Psoas muscle (tissue), 8 donors: ENCODE measurements at regions of chr10 and their contacts with region 1.

Region 1: DNA sequence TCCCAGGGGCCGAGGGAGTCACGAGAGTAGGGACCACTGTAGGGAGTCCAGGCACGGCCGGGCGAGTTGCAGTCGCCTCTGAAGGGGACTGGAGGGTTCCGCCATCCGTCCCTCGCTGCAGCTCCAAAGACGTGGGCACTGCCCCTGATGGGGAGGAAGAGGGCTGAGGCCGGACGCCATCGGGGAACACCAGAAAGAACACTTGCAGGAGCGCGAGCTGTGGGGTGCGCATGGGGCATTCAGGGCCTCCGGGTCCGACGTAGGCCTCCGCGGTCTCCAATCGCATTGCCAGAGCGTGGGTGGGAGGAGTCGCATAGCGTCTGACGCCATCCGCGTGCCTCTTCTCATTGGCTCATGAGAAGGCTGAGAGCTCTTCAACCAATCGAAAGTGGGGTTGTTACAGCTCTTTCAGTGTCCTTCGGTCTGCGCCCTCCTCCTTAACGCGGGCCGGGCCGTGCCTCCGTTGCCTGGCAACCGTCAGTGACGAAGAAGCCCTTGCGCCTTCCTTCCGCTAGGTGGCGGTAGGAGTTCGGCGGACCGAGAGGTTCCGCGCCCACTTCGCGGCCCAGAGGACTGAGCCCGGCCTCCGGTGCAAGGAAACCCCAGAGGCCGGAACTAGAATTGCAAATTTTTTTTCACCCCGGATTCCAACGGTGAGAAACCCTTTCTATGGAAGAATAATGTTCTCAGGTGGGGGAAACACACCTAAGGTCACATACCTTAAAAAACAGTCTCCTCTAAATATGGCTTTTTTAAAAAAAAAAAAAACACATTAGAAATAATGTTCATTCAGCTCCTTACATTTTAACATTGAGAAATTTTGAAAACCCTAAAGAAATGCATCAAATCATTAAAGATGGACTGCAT is at the start of gene TCTN3:
- DNase-seq: peak; percentile 95 to 97
- ATAC-seq: peak; percentile 100
- H3K4me3 ChIP-seq: peak within 1 kb of the TSS; percentile 77
- H3K27ac ChIP-seq: peak within 1 kb of the TSS; percentile 68
- H3K4me1 ChIP-seq: peaks cover 11% of the 10 kb centered on the region
- H3K27me3 ChIP-seq: no peaks in the 10 kb centered on the region
- CTCF ChIP-seq: peak; percentile 99
- total RNA-seq, gene TCTN3: 6.0 to 10.2 (median 9.3) TPM

Region 2: DNA sequence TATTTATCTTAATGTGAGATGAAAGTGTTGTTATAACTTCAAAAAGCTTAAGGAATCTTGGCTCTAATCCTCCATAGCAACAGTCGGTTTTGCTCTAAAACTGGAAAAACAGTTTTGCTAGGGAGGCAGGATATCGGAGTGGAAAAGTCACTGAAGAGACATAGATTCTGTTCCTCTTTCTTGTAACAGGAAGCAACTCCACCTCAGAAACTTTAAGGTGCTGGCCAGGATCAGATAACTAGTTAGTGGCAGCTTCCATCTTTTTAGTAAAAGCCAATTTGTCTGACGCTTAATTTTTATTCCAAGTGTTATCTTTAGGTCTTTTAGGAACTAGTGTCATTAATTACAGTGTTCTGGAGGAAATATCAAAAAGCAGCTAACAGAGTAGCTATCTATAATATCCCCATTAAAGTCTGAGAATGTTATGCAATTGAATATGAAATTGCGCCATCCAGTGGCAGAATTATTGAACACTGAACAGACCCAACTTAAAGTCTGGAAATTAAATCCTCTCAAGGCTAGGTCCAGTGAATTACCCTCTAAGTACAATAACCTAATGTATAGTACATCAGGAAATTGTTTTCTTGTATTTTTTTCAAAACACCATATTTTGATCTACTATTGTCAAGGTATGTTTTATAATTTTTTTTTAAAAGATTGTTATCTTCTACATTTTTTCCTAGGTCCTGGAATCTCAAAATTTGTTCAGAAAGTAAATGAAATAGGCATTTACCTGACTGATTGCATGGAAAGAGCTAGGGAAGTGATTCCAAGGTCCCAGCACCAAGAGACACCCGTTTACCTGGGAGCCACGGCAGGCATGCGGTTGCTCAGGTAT is 148.0 kb after region 1 on chr10:
- intact Hi-C with region 1: loop called (anchors 2 to 10 kb)
- DNase-seq: no peak
- ATAC-seq: peak in 1 of 4 donors; percentile 68
- H3K4me3 ChIP-seq: no peak overlapping the region
- H3K27ac ChIP-seq: no peak overlapping the region
- H3K4me1 ChIP-seq: no peaks in the 10 kb centered on the region
- H3K27me3 ChIP-seq: peaks cover 0 to 1% (median 0%) of the 10 kb centered on the region in 3 donors
- CTCF ChIP-seq: peak; percentile 53

Region 3: GRCh38 chr10:96129387-96130325 is 435.8 kb after region 1 on chr10 and contains the start of gene ZNF518A:
- intact Hi-C with region 1: loop called in 1 of 2 experiments (anchors 10 kb)
- DNase-seq: peak; percentile 91 to 95
- ATAC-seq: peak; percentile 97 to 99 (median 98)
- H3K4me3 ChIP-seq: peak within 1 kb of the TSS; percentile 88
- H3K27ac ChIP-seq: peak within 1 kb of the TSS; percentile 88
- H3K4me1 ChIP-seq: no peaks in the 10 kb centered on the region
- H3K27me3 ChIP-seq: peaks cover 0 to 43% (median 18%) of the 10 kb centered on the region in 3 donors
- CTCF ChIP-seq: no peak
- total RNA-seq, gene ZNF518A: 7.4 to 10.2 (median 8.2) TPM

Region 4: GRCh38 chr10:96201527-96201926 is 507.6 kb after region 1 on chr10:
- intact Hi-C with region 1: no loop called
- DNase-seq: no peak
- ATAC-seq: no peak
- H3K4me3 ChIP-seq: no peak overlapping the region
- H3K27ac ChIP-seq: no peak overlapping the region
- H3K4me1 ChIP-seq: no peaks in the 10 kb centered on the region
- H3K27me3 ChIP-seq: no peaks in the 10 kb centered on the region
- CTCF ChIP-seq: no peak